Activated naive CD8-positive, alpha-beta T cell treated with anti-CD3 and anti-CD28 coated beads, Interleukin-2, amount 10 ng/mL, durations not matched to agents 7 days and 5 days (primary cell): ENCODE measurements at regions of chr19 and their contacts with region 1.

Region 1: DNA sequence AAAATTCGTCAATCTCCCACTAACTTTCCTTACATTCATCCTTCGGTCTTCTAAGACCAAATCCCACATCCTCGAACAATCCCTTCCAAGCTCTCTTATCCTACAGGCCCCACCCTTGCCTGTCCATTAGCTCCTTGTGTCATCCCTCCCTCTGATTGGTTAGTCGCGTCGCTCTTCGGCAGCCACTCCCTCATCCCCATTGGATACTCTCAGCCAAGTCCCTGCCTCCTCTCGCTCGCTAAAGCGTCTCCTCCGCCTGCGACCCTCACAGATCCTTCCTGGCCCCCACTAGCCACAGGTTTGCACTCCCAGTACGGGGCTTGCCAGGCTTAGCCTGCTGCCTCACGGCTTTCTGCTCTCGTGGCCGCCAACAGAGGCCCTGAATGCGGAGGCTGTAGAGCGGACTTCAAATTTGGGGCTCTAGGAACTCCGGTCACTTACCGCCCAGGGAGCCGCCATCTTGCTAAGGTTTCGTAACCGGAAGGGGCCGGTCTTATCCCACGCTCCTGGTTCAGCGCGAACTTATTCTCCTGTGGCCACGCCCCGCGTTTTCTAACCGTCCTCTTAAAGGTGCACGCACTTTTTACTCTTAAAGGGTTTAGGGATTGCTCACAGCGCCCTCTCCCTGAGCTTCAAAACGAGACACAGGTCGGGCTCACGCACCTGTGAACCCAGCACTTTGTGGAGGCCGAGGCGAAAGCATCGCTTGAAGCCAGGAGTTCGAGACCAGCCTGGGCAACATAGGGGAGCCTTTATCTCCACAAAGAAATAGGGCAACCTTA is at the start of gene DMAC2:
- DNase-seq: peak; percentile 89
- ATAC-seq: peak; percentile 96
- H3K4me3 Mint-ChIP-seq: no peak within 1 kb of the TSS
- H3K27ac Mint-ChIP-seq: peak within 1 kb of the TSS; percentile 47
- H3K4me1 Mint-ChIP-seq: peaks cover 12% of the 10 kb centered on the region
- H3K27me3 Mint-ChIP-seq: peaks cover 3% of the 10 kb centered on the region
- total RNA-seq, gene DMAC2: 41.3 to 42.6 TPM

Region 2: DNA sequence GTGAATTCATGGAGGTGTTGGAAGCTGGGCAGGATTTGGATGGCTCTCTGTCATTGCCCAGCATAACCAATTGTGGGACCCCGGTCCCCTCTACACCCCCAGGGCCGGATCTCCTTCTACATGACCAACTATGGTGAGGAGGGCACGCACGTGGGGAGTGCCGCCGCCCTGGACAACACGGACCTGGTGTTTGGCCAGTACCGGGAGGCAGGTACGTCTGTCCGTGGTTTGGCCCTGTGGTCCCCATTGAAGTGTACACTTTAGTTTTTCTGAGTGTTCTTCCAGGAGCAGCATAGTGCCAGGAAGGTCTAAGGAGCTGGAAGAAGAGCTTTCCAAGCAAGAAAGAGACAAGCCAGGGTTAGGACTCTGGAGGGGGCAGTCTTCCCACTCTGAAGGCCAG is 25.7 kb before region 1 on chr19:
- POLR2A ChIA-PET with region 1: no interaction called
- DNase-seq: no peak
- ATAC-seq: no peak
- H3K4me3 Mint-ChIP-seq: no peak overlapping the region
- H3K27ac Mint-ChIP-seq: no peak overlapping the region
- H3K4me1 Mint-ChIP-seq: peaks cover 14% of the 10 kb centered on the region
- H3K27me3 Mint-ChIP-seq: no peaks in the 10 kb centered on the region

Region 3: GRCh38 chr19:41426952-41427646 is 12.5 kb before region 1 on chr19 and contains the start of gene B3GNT8:
- POLR2A ChIA-PET with region 1: interaction called, 24 read pairs
- DNase-seq: peak; percentile 71
- ATAC-seq: peak; percentile 74
- H3K4me3 Mint-ChIP-seq: peak within 1 kb of the TSS; percentile 98
- H3K27ac Mint-ChIP-seq: peak within 1 kb of the TSS; percentile 97
- H3K4me1 Mint-ChIP-seq: peaks cover 17% of the 10 kb centered on the region
- H3K27me3 Mint-ChIP-seq: no peaks in the 10 kb centered on the region
- total RNA-seq, gene B3GNT8: 2.0 to 2.2 TPM